ENCODE measurements at regions of chr19 and their contacts with region 1.

Region 1: DNA sequence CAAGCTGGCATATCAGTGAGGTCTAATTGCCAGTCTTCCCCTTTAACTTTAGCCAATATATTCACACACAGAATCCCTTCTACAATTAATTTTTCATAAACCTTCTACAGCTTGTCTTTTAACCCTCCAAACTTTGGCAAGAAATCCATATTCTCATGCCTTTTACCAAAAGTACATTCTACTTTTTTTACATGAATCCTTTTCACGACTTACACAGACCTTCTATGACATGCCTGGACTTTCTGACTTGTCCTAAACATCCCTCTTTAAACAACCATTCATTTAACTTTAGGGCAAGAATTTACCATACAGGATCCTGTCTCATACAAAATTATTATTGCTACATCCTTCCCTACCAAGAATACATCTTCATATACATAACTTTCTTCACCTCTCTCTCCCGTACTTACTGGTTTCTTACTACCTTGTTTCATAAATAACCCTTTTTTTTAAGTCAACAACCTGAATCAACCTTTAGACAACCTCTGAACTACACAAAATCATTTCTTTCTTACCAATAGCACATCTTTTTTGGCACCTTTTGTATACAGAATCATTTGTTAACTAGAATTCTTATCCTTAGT is 23.5 kb downstream of the ZNF544 start:
- DNase-seq: no peak
- ATAC-seq: no peak
- H3K4me3 Mint-ChIP-seq: no peak overlapping the region
- H3K27ac Mint-ChIP-seq: no peak overlapping the region
- H3K4me1 Mint-ChIP-seq: peaks cover 7% of the 10 kb centered on the region
- H3K27me3 Mint-ChIP-seq: no peaks in the 10 kb centered on the region

Region 2: GRCh38 chr19:57914531-57914930 is 337.7 kb before region 1 on chr19:
- CTCF ChIA-PET with region 1: no interaction called
- POLR2A ChIA-PET with region 1: no interaction called
- intact Hi-C with region 1: no loop called
- DNase-seq: no peak
- ATAC-seq: no peak
- H3K4me3 Mint-ChIP-seq: no peak overlapping the region
- H3K27ac Mint-ChIP-seq: no peak overlapping the region
- H3K4me1 Mint-ChIP-seq: peaks cover 27% of the 10 kb centered on the region
- H3K27me3 Mint-ChIP-seq: no peaks in the 10 kb centered on the region

Region 3: GRCh38 chr19:58196901-58197616 is 55.1 kb before region 1 on chr19:
- CTCF ChIA-PET with region 1: no interaction called
- POLR2A ChIA-PET with region 1: no interaction called
- intact Hi-C with region 1: loop called in 1 of 2 experiments (anchors 5 kb)
- DNase-seq: no peak
- ATAC-seq: no peak
- H3K4me3 Mint-ChIP-seq: no peak overlapping the region
- H3K27ac Mint-ChIP-seq: no peak overlapping the region
- H3K4me1 Mint-ChIP-seq: no peaks in the 10 kb centered on the region
- H3K27me3 Mint-ChIP-seq: no peaks in the 10 kb centered on the region

Region 4: GRCh38 chr19:58228585-58229254 is 23.5 kb before region 1 on chr19 and contains the start of gene ZNF544:
- CTCF ChIA-PET with region 1: no interaction called
- POLR2A ChIA-PET with region 1: no interaction called
- intact Hi-C with region 1: loop called in 1 of 2 experiments (anchors 2 kb)
- DNase-seq: peak; percentile 85
- ATAC-seq: peak; percentile 87
- H3K4me3 Mint-ChIP-seq: peak within 1 kb of the TSS; percentile 91
- H3K27ac Mint-ChIP-seq: peak within 1 kb of the TSS; percentile 95
- H3K4me1 Mint-ChIP-seq: peaks cover 24% of the 10 kb centered on the region
- H3K27me3 Mint-ChIP-seq: no peaks in the 10 kb centered on the region
- total RNA-seq, gene ZNF544: 32.2 to 38.5 TPM

Region 5: DNA sequence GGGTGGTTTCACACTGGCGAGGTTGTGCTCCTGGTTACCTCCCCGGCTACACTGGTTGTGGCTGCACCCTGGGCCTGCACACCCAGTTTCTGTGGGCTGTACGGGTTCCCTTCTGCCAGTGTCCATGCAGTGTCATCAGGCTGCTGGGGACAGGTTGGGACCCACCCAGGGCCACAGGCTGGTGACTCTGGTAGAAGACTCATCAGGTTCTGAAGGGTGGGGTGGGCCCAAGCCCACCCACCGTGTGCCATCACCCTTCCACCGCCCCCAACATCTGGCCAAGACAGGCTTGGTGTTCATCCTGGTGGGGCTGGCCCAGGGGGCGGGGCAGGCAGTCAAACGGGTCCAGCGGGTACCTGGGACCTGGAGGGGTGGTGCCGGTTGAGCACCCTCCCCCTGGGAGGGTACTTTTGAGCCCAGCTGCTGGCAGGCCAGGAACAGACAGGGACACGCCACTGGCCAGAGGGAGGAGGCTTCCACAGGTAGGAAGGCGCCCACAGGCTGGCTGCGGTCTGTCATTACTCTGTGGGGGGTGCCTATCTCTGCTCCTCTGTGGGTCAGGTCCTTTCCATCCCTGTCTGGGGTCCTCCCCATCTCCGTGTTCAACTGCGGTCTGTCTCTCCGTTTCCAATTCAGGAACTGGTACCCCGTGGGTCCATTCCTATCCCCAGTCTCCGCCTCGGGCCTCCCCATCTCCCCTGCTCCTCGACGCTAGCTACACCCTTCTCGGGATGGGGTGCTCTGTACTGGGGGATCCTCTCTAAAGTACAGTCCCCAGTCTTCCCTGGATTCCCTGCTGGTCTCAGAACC is 143.2 kb after region 1 on chr19 and contains the start of gene RNF225:
- CTCF ChIA-PET with region 1: no interaction called
- POLR2A ChIA-PET with region 1: no interaction called
- intact Hi-C with region 1: no loop called
- DNase-seq: peak; percentile 31
- ATAC-seq: peak; percentile 21
- H3K4me3 Mint-ChIP-seq: no peak within 1 kb of the TSS
- H3K27ac Mint-ChIP-seq: no peak within 1 kb of the TSS
- H3K4me1 Mint-ChIP-seq: peaks cover 22% of the 10 kb centered on the region
- H3K27me3 Mint-ChIP-seq: peaks cover 2% of the 10 kb centered on the region
- total RNA-seq, gene RNF225: 0.25 to 0.56 TPM

Measured in activated CD4-positive, alpha-beta T cell treated with anti-CD3 and anti-CD28 coated beads for 36 hours (primary cell).